BJ (cell line): ENCODE measurements at regions of chr9 and their contacts with region 1.

Region 1: GRCh38 chr9:130107234-130107861 is 53.6 kb downstream of the GPR107 start:
- DNase-seq: no peak
- H3K4me3 ChIP-seq: no peak overlapping the region
- H3K27me3 ChIP-seq: no peaks in the 10 kb centered on the region
- CTCF ChIP-seq: peak; percentile 80

Region 2: DNA sequence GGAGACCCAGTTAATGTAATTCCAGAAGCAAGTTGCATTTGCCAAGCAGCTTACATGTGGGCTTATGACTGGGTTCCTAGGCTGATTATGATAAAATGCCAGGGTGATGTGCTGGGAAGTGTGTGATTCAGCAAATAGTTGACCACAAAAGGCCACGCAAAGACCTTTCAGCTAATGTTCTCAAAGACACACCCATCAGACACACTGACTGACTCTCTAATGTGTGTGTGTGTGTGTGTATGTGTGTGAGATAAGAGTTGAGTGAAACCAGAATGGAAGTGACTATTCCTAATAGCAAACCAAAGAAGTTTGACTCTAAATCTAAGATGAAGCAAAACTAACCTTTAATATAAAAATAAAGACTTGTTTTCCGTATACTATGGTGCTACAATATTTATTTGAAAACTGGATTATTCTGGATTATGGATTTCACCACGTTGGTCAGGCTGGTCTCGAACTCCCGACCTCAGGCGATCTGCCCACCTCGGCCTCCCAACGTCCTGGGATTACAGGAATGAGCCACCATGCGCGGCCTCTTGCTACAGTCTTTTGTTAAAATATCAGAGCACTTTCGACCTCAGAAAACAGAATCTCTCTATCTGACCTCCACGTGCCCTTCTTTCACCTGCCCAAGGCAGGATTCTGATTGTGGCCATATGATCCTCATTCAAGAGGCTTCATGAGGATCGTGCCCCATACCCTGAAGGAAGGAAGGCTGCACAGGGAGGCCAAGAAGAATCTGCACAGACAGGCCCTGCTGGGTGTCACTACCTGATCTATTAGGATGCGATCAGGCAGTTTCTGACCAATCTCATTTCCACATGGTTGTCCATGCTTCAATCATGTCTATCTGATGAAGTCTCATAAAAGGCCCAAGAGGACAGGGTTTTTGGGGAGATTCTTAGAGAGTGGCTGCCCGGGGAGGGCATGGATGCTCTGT is 196.4 kb before region 1 on chr9:
- CTCF ChIA-PET with region 1: no interaction called
- POLR2A ChIA-PET with region 1: no interaction called
- DNase-seq: peak; percentile 99
- H3K4me3 ChIP-seq: no peak overlapping the region
- H3K27me3 ChIP-seq: no peaks in the 10 kb centered on the region
- CTCF ChIP-seq: no peak

Region 3: GRCh38 chr9:130118841-130119518 is 11.6 kb after region 1 on chr9:
- CTCF ChIA-PET with region 1: interaction called, 28 read pairs
- POLR2A ChIA-PET with region 1: no interaction called
- DNase-seq: no peak
- H3K4me3 ChIP-seq: no peak overlapping the region
- H3K27me3 ChIP-seq: no peaks in the 10 kb centered on the region
- CTCF ChIP-seq: no peak

Region 4: GRCh38 chr9:130227833-130228232 is 120.5 kb after region 1 on chr9:
- CTCF ChIA-PET with region 1: interaction called, 10 read pairs
- POLR2A ChIA-PET with region 1: no interaction called
- DNase-seq: no peak
- H3K4me3 ChIP-seq: no peak overlapping the region
- H3K27me3 ChIP-seq: no peaks in the 10 kb centered on the region
- CTCF ChIP-seq: no peak

Region 5: GRCh38 chr9:130235897-130236668 is 128.7 kb after region 1 on chr9:
- CTCF ChIA-PET with region 1: interaction called, 51 read pairs
- POLR2A ChIA-PET with region 1: no interaction called
- DNase-seq: no peak
- H3K4me3 ChIP-seq: no peak overlapping the region
- H3K27me3 ChIP-seq: no peaks in the 10 kb centered on the region
- CTCF ChIP-seq: peak; percentile 98

Region 6: DNA sequence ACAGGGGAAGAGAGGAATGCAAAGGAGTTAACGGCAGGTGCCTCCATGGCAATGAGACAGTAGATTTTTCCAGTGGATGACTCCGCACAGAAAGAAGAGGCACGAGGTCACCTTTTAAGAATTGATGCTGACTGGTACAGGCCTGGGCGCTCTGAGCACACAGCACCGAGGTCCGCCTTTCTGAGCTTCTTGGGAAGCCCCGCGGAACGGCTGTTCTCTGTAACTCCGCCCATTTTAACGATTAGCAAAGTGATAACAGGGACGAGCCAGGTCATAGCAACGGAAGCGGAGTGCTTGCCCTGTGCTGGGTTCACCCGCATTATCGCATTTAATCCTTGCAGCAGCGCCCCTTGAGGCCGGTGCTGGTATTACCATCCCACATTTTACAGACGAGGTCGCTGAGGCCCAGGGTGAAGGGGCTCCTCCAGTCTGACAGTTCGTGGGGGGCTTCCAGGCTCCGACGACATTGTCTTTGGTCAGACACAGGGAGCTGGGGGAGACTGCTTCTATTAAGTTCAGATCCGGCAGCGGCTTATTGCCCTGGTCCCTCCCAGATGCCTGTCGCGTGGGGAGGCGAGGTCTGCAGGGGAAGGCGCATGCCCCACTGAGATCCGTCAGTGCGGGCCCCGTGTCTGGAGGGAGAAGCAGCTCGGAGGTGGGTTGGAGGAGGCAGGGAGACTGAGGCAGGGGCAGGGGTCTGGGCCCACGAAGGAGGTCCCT is 135.8 kb after region 1 on chr9:
- CTCF ChIA-PET with region 1: interaction called, 51 read pairs
- POLR2A ChIA-PET with region 1: no interaction called
- DNase-seq: no peak
- H3K4me3 ChIP-seq: no peak overlapping the region
- H3K27me3 ChIP-seq: no peaks in the 10 kb centered on the region; the same call in 1 of the 2 replicates
- CTCF ChIP-seq: peak; percentile 89

Region 7: GRCh38 chr9:130343445-130343918 is 236.1 kb after region 1 on chr9:
- CTCF ChIA-PET with region 1: interaction called, 53 read pairs
- POLR2A ChIA-PET with region 1: no interaction called
- DNase-seq: no peak
- H3K4me3 ChIP-seq: no peak overlapping the region
- H3K27me3 ChIP-seq: no peaks in the 10 kb centered on the region
- CTCF ChIP-seq: peak; percentile 79

Region 8: GRCh38 chr9:130682490-130683121 is 575.3 kb after region 1 on chr9:
- CTCF ChIA-PET with region 1: interaction called, 10 read pairs
- POLR2A ChIA-PET with region 1: no interaction called
- DNase-seq: no peak
- H3K4me3 ChIP-seq: no peak overlapping the region
- H3K27me3 ChIP-seq: peaks cover 9% of the 10 kb centered on the region
- CTCF ChIP-seq: peak; percentile 86

Region 9: DNA sequence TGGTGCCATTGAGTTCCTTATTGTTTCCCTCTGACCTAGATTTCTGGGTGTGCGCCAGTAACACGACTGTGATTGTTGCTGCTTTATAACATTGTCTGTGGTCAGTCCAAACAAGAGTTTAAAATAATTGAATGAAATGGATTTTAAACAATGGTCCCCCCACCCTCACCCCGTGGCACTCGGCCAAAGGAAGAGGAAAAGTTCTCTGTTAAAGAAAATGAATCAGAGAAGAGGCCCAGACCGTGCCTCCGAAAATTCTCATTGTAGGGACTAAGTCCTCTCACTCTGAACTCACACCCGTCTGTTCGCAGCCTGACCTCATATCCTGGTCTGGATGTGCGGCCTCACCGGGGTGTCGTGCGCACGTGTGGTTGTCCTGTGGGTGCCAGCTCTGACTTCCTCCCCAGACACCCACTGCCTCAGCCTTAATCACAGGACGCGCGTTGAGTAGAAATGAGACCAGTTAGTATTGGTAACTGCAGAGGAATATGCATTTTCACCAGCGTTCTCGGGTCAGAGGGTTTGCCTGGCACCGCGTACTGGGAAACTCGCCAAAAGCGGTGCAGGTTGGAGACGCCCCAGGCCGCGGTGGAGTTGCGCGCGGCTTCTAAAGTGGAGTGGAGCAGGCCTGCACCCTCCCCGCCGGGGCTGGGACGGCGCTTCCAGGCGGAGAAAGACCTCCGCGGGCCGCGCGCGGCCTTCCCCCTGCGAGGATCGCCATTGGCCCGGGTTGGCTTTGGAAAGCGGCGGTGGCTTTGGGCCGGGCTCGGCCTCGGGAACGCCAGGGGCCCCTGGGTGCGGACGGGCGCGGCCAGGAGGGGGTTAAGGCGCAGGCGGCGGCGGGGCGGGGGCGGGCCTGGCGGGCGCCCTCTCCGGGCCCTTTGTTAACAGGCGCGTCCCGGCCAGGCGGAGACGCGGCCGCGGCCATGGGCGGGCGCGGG is 727.3 kb after region 1 on chr9 and contains the start of gene ABL1:
- CTCF ChIA-PET with region 1: no interaction called
- POLR2A ChIA-PET with region 1: no interaction called
- DNase-seq: no peak
- H3K4me3 ChIP-seq: peak within 1 kb of the TSS; percentile 80
- H3K27me3 ChIP-seq: no peaks in the 10 kb centered on the region
- CTCF ChIP-seq: no peak
- polyA plus RNA-seq, gene ABL1: 26.1 and 30.4 TPM in 2 replicates